MCF 10A (cell line): ENCODE measurements at regions of chr21 and their contacts with region 1.

Region 1: DNA sequence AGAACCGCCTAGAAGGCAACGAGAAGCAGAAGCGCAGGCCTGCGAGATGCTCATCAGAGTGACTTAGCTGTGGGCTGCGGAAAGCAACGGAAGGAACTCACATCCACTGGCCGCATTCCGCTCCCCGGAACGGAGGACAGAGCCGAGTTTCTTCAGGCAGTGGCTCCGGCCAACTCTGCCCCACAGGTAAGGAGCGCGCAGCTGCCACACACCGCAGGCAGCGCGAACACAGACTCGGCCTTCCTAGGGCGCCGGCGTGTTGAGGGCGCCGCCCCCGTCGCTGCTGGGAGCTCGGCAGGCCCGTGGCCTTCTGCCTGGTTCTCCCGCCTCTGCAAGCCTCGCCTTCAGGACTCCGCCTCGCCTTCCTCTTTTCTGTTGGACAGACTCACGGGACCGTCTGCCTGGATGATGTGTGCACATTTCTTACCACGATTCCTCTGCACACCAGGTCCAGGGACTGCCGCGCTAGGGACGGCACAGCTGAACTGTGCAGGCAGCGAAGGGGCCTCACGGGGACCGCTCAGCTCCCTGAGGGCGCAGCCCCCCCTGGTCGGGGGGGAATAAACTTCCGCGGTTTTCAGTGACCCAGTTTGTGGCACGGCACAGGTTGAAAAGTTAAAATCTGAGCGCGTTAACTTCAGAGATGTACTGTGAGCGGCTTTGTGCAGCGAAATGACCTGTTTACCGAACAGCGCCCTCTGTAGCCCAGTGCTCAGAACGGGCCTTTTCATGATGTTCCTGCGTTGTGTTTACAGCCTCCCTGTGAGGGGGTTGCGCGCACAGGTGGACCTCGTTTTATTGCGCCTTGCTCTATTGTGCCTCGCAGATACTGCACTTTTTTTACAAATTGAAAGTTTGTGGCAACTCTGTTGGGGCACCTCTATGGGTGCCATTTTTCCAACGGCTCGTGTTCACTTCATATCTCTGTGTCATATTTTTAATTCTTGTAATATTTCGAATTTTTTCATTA is 15.8 kb downstream of the TCP10L start:
- DNase-seq: peak; percentile 83
- H3K4me3 Mint-ChIP-seq: peak overlapping the region; percentile 76
- H3K27ac Mint-ChIP-seq: no peak overlapping the region
- H3K4me1 Mint-ChIP-seq: peaks cover 20% of the 10 kb centered on the region
- H3K27me3 Mint-ChIP-seq: no peaks in the 10 kb centered on the region
- CTCF ChIP-seq: peak; percentile 83

Region 2: DNA sequence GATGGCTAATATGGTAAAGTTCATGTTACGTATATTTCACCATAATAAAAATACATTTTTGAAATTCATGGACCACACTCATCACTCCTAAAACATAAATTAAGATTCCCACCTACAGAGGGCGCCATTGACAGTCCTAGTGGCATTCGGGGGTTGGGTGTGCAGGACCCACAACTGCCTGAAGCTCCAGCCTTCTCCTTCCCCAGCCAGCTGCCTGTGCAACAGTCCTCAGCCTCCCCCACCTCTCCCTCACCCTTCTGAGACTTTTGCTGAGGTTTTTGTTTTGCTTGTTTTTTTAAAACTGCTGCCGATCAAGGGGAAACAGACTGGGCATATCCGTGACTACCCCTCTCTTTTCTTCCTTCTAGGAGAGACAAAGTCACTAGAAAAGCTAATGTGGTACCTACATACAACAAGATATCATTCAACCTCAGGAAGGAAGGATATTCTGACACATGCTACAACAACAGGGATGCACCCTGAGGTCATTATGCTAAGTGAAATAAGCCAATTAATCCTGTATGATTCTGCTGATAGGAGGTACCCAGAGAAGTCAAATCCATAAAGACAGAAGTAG is 166.3 kb before region 1 on chr21:
- CTCF ChIA-PET with region 1: interaction called, 31 read pairs
- POLR2A ChIA-PET with region 1: interaction called, 6 read pairs
- intact Hi-C with region 1: no loop called
- DNase-seq: peak; percentile 81
- H3K4me3 Mint-ChIP-seq: no peak overlapping the region
- H3K27ac Mint-ChIP-seq: no peak overlapping the region
- H3K4me1 Mint-ChIP-seq: no peaks in the 10 kb centered on the region
- H3K27me3 Mint-ChIP-seq: peaks cover 12% of the 10 kb centered on the region
- CTCF ChIP-seq: peak; percentile 66

Region 3: GRCh38 chr21:32412162-32413014 is 157.2 kb before region 1 on chr21 and contains the start of gene EVA1C:
- CTCF ChIA-PET with region 1: interaction called, 15 read pairs
- POLR2A ChIA-PET with region 1: interaction called, 8 read pairs
- intact Hi-C with region 1: loop called (anchors 1 kb)
- DNase-seq: peak; percentile 72
- H3K4me3 Mint-ChIP-seq: peak within 1 kb of the TSS; percentile 97
- H3K27ac Mint-ChIP-seq: peak within 1 kb of the TSS; percentile 87
- H3K4me1 Mint-ChIP-seq: peaks cover 44% of the 10 kb centered on the region
- H3K27me3 Mint-ChIP-seq: no peaks in the 10 kb centered on the region
- CTCF ChIP-seq: no peak
- total RNA-seq, gene EVA1C: 16.8 and 22.2 TPM in 2 replicates

Region 4: GRCh38 chr21:32559006-32559610 is 10.4 kb before region 1 on chr21:
- CTCF ChIA-PET with region 1: interaction called, 20 read pairs
- POLR2A ChIA-PET with region 1: interaction called, 7 read pairs
- intact Hi-C with region 1: no loop called
- DNase-seq: no peak
- H3K4me3 Mint-ChIP-seq: no peak overlapping the region
- H3K27ac Mint-ChIP-seq: no peak overlapping the region
- H3K4me1 Mint-ChIP-seq: peaks cover 6% of the 10 kb centered on the region
- H3K27me3 Mint-ChIP-seq: no peaks in the 10 kb centered on the region
- CTCF ChIP-seq: no peak

Region 5: GRCh38 chr21:32581732-32582131 is 12.2 kb after region 1 on chr21:
- CTCF ChIA-PET with region 1: interaction called, 10 read pairs
- POLR2A ChIA-PET with region 1: no interaction called
- intact Hi-C with region 1: no loop called
- DNase-seq: no peak
- H3K4me3 Mint-ChIP-seq: no peak overlapping the region
- H3K27ac Mint-ChIP-seq: no peak overlapping the region
- H3K4me1 Mint-ChIP-seq: no peaks in the 10 kb centered on the region
- H3K27me3 Mint-ChIP-seq: peaks cover 39% of the 10 kb centered on the region
- CTCF ChIP-seq: no peak

Region 6: GRCh38 chr21:32604464-32604863 is 34.9 kb after region 1 on chr21:
- CTCF ChIA-PET with region 1: interaction called, 11 read pairs
- POLR2A ChIA-PET with region 1: interaction called, 9 read pairs
- intact Hi-C with region 1: no loop called
- DNase-seq: no peak
- H3K4me3 Mint-ChIP-seq: no peak overlapping the region
- H3K27ac Mint-ChIP-seq: no peak overlapping the region
- H3K4me1 Mint-ChIP-seq: no peaks in the 10 kb centered on the region
- H3K27me3 Mint-ChIP-seq: no peaks in the 10 kb centered on the region
- CTCF ChIP-seq: no peak